K562 (cell line): ENCODE measurements at regions of chr2 and their contacts with region 1.

Region 1: DNA sequence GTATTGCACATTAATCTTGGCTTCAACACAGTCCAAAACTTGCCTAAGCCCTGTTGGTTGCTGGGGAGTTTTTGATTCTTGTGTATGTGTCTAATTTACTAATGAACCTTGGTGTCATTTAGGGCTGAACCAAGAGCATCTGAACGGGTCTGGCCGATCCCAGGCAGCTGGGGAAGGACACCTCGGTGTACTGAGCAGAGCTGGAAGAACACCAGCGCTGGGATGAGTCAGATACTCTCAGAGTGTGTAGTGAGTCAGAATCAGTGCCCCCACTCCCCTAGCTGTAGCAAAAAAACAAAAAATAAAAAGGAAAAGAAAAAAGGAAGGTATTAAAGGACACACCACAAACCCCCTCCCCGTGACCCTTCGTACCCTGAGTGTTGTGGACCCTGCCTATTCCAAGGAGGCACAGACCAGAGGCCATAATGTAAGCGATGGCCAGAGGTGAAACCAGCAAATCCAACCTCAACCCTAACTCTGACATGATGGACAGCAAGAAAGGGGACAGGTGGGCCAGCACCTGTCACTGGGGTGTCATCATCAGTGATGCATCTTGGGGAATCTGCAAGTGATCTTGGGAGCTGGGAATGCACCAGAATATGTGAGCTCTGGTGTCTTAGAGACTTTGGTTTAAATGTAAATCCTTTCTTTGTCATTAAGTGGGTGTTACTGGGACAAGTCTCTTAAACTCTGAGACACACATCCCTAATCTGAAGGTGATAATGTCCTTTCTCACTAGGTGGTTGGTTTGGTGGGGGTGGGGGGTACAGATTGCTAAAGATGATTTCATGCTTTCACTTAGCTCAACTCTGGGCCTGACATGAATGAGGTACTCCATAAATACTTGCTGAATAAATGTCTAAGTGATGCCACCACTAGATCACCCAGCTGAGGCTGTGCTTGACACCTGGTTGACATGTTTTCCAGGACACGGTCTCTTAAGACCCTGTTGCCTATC is 34.2 kb upstream of the NCOA1 start:
- DNase-seq: peak; percentile 76 to 85 (median 81)
- ATAC-seq: peak; percentile 95
- H3K4me3 ChIP-seq: no peak overlapping the region
- H3K27ac ChIP-seq: peak overlapping the region; percentile 52
- H3K4me1 ChIP-seq: peaks cover 23 to 41% of the 10 kb centered on the region in 2 experiments
- H3K27me3 ChIP-seq: no peaks in the 10 kb centered on the region; a peak in 1 of 5 replicates
- CTCF ChIP-seq: 0 out of 6 replicates have a peak, but pooled peaks of 1 of the 3 experiments have one; percentile 1
- EP300 ChIP-seq: peak; percentile 39; the same call in 1 of the 2 replicates
- POLR2A ChIP-seq: no peak
- RAD21 ChIP-seq: no peak

Region 2: DNA sequence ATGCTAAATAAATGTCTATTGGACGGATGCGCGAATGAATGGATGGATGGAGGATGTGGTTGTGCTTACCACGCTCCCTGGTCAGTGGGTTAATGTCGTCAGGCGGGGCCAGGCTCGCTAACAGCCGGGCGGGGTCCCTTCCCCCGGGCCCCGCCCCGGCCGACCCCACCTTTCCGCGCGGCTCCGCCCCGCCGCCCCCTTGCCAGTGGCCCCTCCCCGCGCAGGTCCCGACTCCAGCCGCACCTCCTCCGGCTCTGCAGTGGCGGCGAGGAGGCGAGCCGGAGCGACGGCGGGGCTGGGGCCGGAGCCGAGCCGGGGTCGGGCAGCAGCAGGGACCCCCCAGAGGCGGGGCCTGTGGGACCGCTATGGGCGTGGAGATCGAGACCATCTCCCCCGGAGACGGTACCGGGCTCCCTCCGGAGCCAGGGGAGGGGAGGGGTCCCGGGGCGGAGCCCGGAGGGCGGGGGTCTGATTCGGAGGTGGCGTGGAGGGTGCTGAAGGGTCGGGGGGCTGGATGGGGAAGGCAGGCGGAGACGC is 407.3 kb before region 1 on chr2 and contains the start of gene FKBP1B:
- CTCF ChIA-PET with region 1: no interaction called
- POLR2A ChIA-PET with region 1: no interaction called
- in situ Hi-C with region 1: no loop called
- intact Hi-C with region 1: no loop called
- DNase-seq: peak; percentile 78 to 94 (median 86)
- ATAC-seq: peak; percentile 63
- H3K4me3 ChIP-seq: peak within 1 kb of the TSS; percentile 47
- H3K27ac ChIP-seq: no peak within 1 kb of the TSS
- H3K4me1 ChIP-seq: peaks cover 8 to 22% of the 10 kb centered on the region in 2 experiments; a peak in 4 of 5 replicates
- H3K27me3 ChIP-seq: peaks cover 10 to 11% of the 10 kb centered on the region in 2 experiments; a peak in 4 of 5 replicates
- CTCF ChIP-seq: no peak
- EP300 ChIP-seq: no peak
- POLR2A ChIP-seq: 0 out of 2 replicates have a peak, but pooled peaks have one; percentile 41
- RAD21 ChIP-seq: no peak
- polyA plus RNA-seq, gene FKBP1B: 0.58 to 1.2 TPM

Region 3: DNA sequence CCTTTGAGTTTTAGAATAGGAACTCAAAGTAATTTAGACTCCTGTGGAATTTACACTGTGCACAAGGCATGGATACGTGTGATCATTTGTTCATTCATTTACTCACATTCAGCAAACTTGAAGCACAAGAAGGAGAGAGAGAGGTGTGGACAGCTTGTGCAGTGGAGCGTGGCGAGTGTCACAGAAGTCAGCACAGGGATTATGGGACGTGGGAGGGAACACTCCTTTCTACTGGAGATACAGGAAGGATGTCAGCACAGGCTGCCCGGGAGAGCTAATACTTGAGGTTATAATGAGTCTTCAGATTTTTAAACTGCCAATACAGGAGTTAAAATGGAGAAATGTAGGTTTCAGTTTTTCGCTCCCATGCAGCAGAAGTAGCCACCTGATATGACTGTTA is 275.0 kb before region 1 on chr2:
- CTCF ChIA-PET with region 1: no interaction called
- POLR2A ChIA-PET with region 1: no interaction called
- in situ Hi-C with region 1: no loop called
- intact Hi-C with region 1: no loop called
- DNase-seq: peak in 2 of 4 experiments; percentile 29 to 50
- ATAC-seq: peak; percentile 82
- H3K4me3 ChIP-seq: no peak overlapping the region
- H3K27ac ChIP-seq: no peak overlapping the region
- H3K4me1 ChIP-seq: peaks cover 0 to 11% of the 10 kb centered on the region in 2 experiments; a peak in 3 of 5 replicates
- H3K27me3 ChIP-seq: 0 out of 5 replicates have a peak, but pooled peaks cover 0 to 3% of the 10 kb centered on the region in 2 experiments
- CTCF ChIP-seq: no peak
- EP300 ChIP-seq: no peak
- POLR2A ChIP-seq: no peak
- RAD21 ChIP-seq: no peak

Region 4: GRCh38 chr2:24471662-24472061 is 14.8 kb after region 1 on chr2:
- CTCF ChIA-PET with region 1: no interaction called
- POLR2A ChIA-PET with region 1: interaction called, 5 read pairs
- in situ Hi-C with region 1: no loop called
- intact Hi-C with region 1: loop called (anchors 2 kb)
- DNase-seq: peak in 1 of 4 experiments; percentile 41
- ATAC-seq: peak; percentile 87
- H3K4me3 ChIP-seq: no peak overlapping the region
- H3K27ac ChIP-seq: no peak overlapping the region
- H3K4me1 ChIP-seq: peaks cover 0 to 7% of the 10 kb centered on the region in 2 experiments; a peak in 2 of 5 replicates
- H3K27me3 ChIP-seq: no peaks in the 10 kb centered on the region
- CTCF ChIP-seq: no peak
- EP300 ChIP-seq: no peak
- POLR2A ChIP-seq: no peak
- RAD21 ChIP-seq: no peak

Region 5: DNA sequence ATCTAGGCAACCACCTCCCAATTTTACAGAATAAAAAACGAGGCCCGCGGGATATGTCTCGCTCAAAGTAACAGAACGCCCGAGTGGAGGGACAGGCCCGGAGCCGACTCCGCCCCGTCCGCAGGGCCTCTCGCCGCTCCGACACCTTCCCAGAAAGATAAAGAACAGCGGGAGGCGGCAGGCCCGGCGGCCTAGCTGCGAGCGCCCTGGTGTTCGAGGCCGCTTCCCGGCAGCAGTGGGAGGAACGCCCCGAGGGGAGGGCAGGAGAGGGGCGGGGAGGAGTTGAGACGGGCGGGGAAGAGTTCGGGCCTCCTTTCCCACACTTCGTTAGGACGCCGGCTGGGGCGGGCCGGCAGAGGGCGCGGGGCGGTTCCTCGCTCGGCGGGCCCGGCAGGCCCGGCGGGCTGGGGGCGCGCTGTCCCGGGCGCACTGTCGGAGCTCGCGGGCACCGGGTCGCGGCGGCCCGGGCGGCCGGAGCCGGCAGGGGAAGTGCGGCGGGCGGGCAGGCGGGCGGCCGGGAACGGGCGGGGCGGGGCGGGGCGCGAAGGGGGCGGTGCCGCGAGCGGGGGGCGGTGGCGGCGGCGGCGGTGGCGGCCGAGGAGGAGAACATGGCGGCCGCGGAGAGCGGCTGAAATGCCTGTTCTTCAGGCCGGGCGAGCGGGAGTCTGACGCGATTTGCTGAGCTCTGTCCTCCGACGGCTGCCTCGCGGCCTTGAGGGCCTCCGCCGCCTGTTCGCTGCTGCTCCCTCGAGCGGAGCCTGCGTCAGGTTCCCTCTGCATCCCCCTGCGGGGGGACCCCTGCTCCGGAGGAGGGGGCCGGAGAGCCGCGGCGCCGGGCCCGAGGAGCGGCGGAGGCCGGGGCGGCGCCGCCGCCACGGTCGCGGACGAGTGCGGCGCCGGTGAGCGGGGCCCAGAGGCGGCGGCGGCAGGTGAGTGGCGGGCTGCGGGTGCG is 34.1 kb after region 1 on chr2 and contains the start of gene NCOA1:
- CTCF ChIA-PET with region 1: no interaction called
- POLR2A ChIA-PET with region 1: interaction called, 4 read pairs
- in situ Hi-C with region 1: no loop called
- intact Hi-C with region 1: loop called (anchors 5 kb)
- DNase-seq: peak; percentile 88 to 97 (median 92)
- ATAC-seq: peak; percentile 87
- H3K4me3 ChIP-seq: peak within 1 kb of the TSS; percentile 69
- H3K27ac ChIP-seq: peak within 1 kb of the TSS; percentile 77
- H3K4me1 ChIP-seq: peaks cover 24 to 44% of the 10 kb centered on the region in 2 experiments
- H3K27me3 ChIP-seq: no peaks in the 10 kb centered on the region
- CTCF ChIP-seq: peak in 2 of 3 experiments; percentile 8 to 30; a peak in 3 of 6 replicates
- EP300 ChIP-seq: 0 out of 2 replicates have a peak, but pooled peaks have one; percentile 34
- POLR2A ChIP-seq: peak; percentile 57; the same call in 1 of the 2 replicates
- RAD21 ChIP-seq: peak in 1 of 2 experiments; percentile 31
- polyA plus RNA-seq, gene NCOA1: 4.9 to 6.2 TPM